GM10248 (cell line): ENCODE measurements at regions of chr5 and their contacts with region 1.

Region 1: GRCh38 chr5:142175039-142175438 is 66.5 kb downstream of the NDFIP1 start:
- DNase-seq: no peak
- CTCF ChIP-seq: no peak

Region 2: DNA sequence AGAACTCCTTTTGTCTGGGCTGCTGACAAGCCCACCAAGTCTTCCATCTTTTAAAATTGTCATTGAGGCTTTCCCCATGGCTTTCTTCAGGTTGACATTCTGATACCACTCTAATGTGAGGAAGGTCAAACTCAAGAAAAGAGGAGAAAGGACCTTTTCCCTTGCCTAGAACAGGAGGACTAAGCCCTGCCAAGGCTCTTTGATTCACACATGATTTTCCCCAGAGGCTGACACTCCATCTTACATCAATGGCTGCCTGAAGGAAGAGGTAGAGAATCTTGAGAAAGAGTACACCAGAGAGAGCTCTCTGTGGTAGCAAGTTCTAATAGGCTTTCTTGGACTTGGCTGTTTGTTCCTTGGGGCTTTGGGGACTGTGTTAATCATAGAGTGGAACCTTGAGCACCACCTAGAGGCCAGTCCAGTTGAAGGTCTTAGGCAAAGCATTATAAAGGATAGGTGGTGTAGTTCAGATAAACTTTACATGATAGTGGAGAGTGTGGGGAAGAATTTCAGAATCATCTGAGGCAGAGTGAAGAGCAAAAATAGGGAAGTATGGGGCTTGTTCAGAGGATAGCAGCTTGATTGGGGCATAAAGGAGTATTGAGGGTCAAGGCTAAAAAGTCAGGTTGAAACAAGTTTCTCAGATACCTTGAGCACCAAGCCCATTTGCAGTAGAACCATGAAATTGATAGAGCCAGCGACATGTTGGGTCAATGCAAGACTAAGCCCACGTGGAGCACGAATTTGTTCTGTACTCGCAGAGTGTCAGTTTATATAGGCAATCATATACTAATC is 29.7 kb before region 1 on chr5:
- CTCF ChIA-PET with region 1: interaction called, 10 read pairs
- POLR2A ChIA-PET with region 1: no interaction called
- DNase-seq: peak; percentile 50
- CTCF ChIP-seq: peak; percentile 79